CD8-positive, alpha-beta memory T cell (primary cell): ENCODE measurements at regions of chr11 and their contacts with region 1.

Region 1: DNA sequence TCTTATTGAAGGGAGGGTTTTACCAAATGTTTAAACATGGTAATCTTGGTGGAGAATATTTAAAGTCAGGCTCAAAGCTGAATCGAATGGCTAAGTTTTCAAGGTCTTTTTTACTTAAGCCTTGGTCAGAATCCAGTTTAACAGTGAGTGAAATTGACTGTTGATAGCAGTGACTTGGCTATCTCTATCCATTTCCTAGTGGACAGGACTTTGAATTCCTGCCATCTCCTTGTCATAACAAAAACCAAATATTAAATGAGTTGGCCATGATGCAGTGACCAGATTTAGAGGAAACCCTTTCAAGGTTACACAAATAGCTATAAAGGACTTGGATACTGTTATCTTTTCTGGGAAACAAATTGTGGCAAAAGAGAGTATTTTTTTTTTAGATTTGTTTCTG is 92.0 kb downstream of the JRKL start:
- DNase-seq: no peak
- H3K4me3 ChIP-seq: no peak overlapping the region
- H3K4me3 Mint-ChIP-seq: no peak overlapping the region
- H3K27ac ChIP-seq: no peak overlapping the region
- H3K27ac Mint-ChIP-seq: no peak overlapping the region
- H3K4me1 ChIP-seq: no peaks in the 10 kb centered on the region
- H3K4me1 Mint-ChIP-seq: no peaks in the 10 kb centered on the region
- H3K27me3 ChIP-seq: no peaks in the 10 kb centered on the region
- H3K27me3 Mint-ChIP-seq: peaks cover 15 to 19% of the 10 kb centered on the region in 2 donors

Region 2: GRCh38 chr11:96464700-96465307 is 17.0 kb before region 1 on chr11:
- CTCF ChIA-PET with region 1: interaction called, 12 read pairs
- POLR2A ChIA-PET with region 1: no interaction called
- DNase-seq: peak in 2 of 5 donors; percentile 35 to 46
- H3K4me3 ChIP-seq: peak overlapping the region; percentile 16
- H3K4me3 Mint-ChIP-seq: peak overlapping the region in 5 of 7 donors; percentile 13 to 73 (median 63)
- H3K27ac ChIP-seq: no peak overlapping the region
- H3K27ac Mint-ChIP-seq: no peak overlapping the region
- H3K4me1 ChIP-seq: no peaks in the 10 kb centered on the region
- H3K4me1 Mint-ChIP-seq: peaks cover 2 to 10% (median 8%) of the 10 kb centered on the region in 3 donors
- H3K27me3 ChIP-seq: no peaks in the 10 kb centered on the region
- H3K27me3 Mint-ChIP-seq: peaks cover 8 to 15% of the 10 kb centered on the region in 2 donors